Activated CD8-positive, alpha-beta memory T cell treated with anti-CD3 and anti-CD28 coated beads, Interleukin-2, amount 10 ng/mL, durations not matched to agents 7 days and 5 days (primary cell): ENCODE measurements at regions of chr1 and their contacts with region 1.

Region 1: DNA sequence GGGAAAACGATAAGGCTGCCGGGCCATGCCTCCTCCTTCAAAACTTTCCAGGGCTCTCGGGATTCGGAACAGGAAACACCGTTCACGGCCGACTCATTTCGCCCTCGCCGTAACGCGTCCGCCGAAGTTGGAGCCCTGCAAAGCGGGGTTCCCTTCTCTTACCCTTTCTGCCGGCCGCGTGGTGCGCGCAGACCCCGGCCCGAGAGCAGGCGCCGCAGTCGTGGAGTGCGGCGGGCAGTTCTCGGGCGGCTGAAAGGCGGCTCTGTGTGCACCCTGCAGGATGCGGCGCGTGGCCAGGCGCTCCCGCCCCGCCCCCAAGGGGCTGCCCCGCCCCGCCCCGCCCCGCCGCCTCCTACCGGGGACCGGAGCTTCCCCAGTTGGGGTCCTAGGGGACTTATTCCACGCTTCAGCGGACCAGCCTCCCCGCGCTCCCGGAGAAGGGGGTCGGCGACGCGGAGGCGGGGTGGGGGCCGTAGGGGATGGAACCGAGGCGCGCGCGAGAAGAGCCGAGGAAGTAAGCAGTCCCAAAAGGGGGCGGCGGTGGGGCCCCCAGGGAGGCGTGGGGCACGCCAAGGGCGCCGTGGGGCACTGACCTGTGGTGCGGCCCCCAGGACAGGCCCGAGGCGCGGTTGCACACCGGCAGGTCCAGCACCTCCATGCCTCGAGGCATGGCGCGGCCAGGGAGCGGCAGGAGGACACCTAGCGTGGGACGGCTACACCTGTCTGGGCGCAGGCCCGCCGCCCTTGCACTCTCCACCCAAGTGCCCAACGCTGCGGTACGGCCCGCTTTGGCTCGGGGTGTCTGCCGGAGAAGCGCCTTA is at the start of gene MCOLN2:
- DNase-seq: peak; percentile 72
- ATAC-seq: peak; percentile 73
- H3K4me3 Mint-ChIP-seq: peak within 1 kb of the TSS; percentile 83
- H3K27ac Mint-ChIP-seq: peak within 1 kb of the TSS; percentile 92
- H3K4me1 Mint-ChIP-seq: peaks cover 63% of the 10 kb centered on the region
- H3K27me3 Mint-ChIP-seq: peaks cover 3% of the 10 kb centered on the region
- total RNA-seq, gene MCOLN2: 51.8 to 60.6 TPM

Region 2: GRCh38 chr1:84973498-84974334 is 23.3 kb before region 1 on chr1:
- CTCF ChIA-PET with region 1: interaction called, 22 read pairs
- DNase-seq: peak; percentile 51
- ATAC-seq: peak; percentile 18
- H3K4me3 Mint-ChIP-seq: no peak overlapping the region
- H3K27ac Mint-ChIP-seq: peak overlapping the region; percentile 97
- H3K4me1 Mint-ChIP-seq: peaks cover 70% of the 10 kb centered on the region
- H3K27me3 Mint-ChIP-seq: no peaks in the 10 kb centered on the region

Region 3: GRCh38 chr1:85027242-85027983 is 30.4 kb after region 1 on chr1:
- CTCF ChIA-PET with region 1: interaction called, 11 read pairs
- DNase-seq: peak; percentile 54
- ATAC-seq: peak; percentile 90
- H3K4me3 Mint-ChIP-seq: peak overlapping the region; percentile 37
- H3K27ac Mint-ChIP-seq: peak overlapping the region; percentile 47
- H3K4me1 Mint-ChIP-seq: peaks cover 11% of the 10 kb centered on the region
- H3K27me3 Mint-ChIP-seq: no peaks in the 10 kb centered on the region